Activated B cell treated with CpG ODN at 0.5 μM for 24 hours (primary cell): ENCODE measurements at regions of chr6 and their contacts with region 1.

Region 1: GRCh38 chr6:68876792-68877493 is 241.9 kb downstream of the ADGRB3 start:
- DNase-seq: no peak
- ATAC-seq: no peak
- H3K4me3 Mint-ChIP-seq: no peak overlapping the region
- H3K27ac Mint-ChIP-seq: no peak overlapping the region
- H3K4me1 Mint-ChIP-seq: no peaks in the 10 kb centered on the region
- H3K27me3 Mint-ChIP-seq: no peaks in the 10 kb centered on the region
- CTCF ChIP-seq: no peak

Region 2: DNA sequence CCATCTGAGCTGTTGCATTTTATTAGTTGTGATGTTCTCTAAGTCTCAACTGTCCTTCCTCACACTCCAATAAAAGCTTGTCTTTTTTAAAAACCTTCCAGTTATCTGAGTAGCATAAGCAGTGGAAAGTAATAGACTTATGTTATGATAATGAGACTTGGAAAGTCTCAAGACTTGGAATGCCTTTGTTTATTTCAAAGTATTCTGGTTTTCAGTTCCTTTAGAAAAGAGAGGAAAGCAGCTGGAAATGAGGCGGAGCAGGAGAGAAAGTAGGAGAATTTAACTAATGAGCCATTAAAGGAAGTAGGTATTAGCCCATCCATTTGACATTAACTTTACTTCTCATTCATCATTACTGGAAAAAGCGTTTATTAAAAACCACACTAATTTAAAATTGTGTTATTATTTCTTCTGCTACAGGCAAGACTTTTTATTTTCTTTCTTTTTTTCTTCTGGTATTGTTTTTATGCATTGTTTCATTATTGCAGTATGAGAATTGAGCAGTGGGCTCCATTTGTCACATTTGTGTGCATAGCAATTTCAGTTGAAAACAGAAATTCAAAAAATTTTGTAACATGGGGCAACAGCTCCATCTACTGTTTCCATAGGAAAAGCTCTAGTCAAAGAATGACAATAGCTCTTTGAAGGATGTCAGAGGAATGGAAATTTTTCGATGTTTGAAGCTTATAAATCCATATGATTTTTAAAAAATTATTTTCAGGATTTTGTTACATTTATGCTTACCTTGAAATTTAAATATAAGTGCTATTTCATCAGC is 1231.1 kb after region 1 on chr6:
- CTCF ChIA-PET with region 1: no interaction called
- POLR2A ChIA-PET with region 1: no interaction called
- intact Hi-C with region 1: loop called (anchors 2 kb)
- DNase-seq: no peak
- ATAC-seq: no peak
- H3K4me3 Mint-ChIP-seq: no peak overlapping the region
- H3K27ac Mint-ChIP-seq: no peak overlapping the region
- H3K4me1 Mint-ChIP-seq: peaks cover 8% of the 10 kb centered on the region
- H3K27me3 Mint-ChIP-seq: no peaks in the 10 kb centered on the region
- CTCF ChIP-seq: peak; percentile 80

Region 3: DNA sequence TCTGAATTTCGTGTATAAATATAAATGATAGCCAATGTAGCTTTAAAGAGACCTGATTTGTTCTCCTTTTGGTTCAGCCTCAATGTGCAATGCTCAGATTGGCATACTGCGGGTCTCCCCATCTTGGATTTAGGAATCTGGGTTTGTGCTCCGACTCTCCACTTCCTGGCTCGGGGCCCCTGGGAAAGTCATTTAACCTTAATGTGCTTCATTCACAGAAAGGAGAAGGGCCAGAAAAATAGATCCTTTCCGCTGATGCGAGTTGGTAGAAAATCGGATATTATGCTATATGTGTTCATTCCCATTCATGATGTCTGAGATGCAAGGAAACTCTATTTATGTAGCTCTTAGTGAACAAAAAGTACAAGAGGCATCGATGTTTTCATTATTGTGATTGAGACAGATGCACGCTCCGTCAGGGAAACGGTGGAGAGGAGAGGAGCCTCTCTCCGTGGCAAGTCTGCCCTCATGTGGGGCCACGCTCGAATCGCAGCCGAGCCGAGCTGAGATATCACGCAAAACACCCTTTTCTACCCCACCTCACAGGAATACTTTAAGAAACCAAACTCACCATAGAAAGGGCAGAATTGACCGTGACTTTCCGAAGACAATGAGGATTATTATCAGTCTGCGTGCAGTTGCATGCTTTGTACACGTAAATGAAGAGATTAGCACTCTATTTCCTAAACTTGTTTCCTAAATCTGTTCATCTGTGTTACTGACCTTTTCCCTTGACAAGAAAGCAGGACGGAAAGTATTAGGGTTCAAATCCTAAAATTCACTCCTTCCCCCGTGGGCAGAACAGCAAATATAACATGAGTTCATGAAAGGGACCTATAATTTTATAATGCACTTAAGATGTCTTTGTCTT is 1289.4 kb after region 1 on chr6:
- CTCF ChIA-PET with region 1: no interaction called
- POLR2A ChIA-PET with region 1: no interaction called
- intact Hi-C with region 1: loop called (anchors 5 kb)
- DNase-seq: no peak
- ATAC-seq: peak; percentile 52
- H3K4me3 Mint-ChIP-seq: no peak overlapping the region
- H3K27ac Mint-ChIP-seq: peak overlapping the region; percentile 4
- H3K4me1 Mint-ChIP-seq: no peaks in the 10 kb centered on the region
- H3K27me3 Mint-ChIP-seq: no peaks in the 10 kb centered on the region
- CTCF ChIP-seq: no peak